OCI-LY7 (cell line): ENCODE measurements at regions of chr12 and their contacts with region 1.

Region 1: GRCh38 chr12:20376984-20377383 is 8.6 kb downstream of the PDE3A start:
- DNase-seq: peak; percentile 15
- H3K4me3 ChIP-seq: no peak overlapping the region
- H3K27ac ChIP-seq: no peak overlapping the region
- H3K4me1 ChIP-seq: no peaks in the 10 kb centered on the region
- CTCF ChIP-seq: peak; percentile 68

Region 2: GRCh38 chr12:19744734-19745218 is 632.2 kb before region 1 on chr12:
- CTCF ChIA-PET with region 1: no interaction called
- POLR2A ChIA-PET with region 1: no interaction called
- intact Hi-C with region 1: loop called (anchors 5 kb)
- DNase-seq: no peak
- H3K4me3 ChIP-seq: no peak overlapping the region
- H3K27ac ChIP-seq: no peak overlapping the region
- H3K4me1 ChIP-seq: no peaks in the 10 kb centered on the region
- CTCF ChIP-seq: no peak